ENCODE measurements at regions of chr6 and their contacts with region 1.

Region 1: DNA sequence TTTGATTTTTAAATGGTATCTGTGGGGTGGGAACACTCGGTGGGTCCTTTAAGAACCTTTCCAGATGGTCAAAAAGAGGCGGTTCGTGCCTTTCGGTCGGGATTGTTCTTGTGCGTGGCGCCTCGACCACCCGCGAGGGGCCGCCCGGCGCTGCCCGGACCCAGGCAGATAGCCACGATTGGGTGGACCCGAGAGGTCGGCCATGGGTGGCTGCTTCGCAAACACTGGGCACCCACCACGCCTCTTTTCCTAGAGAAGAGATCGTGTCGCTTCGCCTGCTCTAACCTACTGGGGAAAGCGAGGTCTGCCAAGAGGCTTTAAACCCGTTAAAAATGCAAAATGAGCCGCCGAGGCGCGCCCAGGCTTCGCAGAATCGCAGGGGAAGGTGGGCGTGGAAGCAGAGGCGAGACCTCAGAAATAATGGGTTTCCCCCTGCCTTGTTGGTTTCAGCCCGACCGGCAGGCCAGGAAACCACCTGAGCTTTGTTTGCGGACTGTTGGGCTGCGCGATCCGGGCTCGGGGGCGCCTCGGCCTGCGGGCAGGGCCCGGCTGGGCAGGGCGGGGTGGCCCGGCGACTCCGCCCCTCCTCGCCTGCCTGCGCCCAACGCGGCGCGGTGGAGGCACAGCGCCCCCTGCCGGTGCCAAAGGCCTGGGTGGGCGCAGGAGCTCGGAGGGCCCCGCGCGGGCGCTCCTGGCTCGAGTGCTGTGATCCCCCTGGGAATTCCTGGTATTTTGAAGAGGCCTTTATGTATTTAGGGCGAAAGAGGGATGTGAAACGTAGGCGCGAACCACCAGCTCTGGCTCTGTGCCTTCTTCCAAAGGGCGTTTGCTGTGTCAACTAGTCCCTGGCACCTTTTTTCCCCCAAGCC is 1.6 kb downstream of the MARCKS start:
- DNase-seq: peak; percentile 89
- ATAC-seq: peak; percentile 95
- H3K4me3 Mint-ChIP-seq: no peak overlapping the region
- H3K27ac Mint-ChIP-seq: no peak overlapping the region
- H3K4me1 Mint-ChIP-seq: peaks cover 13% of the 10 kb centered on the region
- H3K27me3 Mint-ChIP-seq: peaks cover 32% of the 10 kb centered on the region

Region 2: GRCh38 chr6:112087136-112087911 is 1771.4 kb before region 1 on chr6 and contains the starts of genes FAM229B and TUBE1:
- CTCF ChIA-PET with region 1: no interaction called
- POLR2A ChIA-PET with region 1: no interaction called
- intact Hi-C with region 1: loop called in 1 of 2 experiments (anchors 2 kb)
- DNase-seq: peak; percentile 95
- ATAC-seq: peak; percentile 98
- H3K4me3 Mint-ChIP-seq: no peak within 1 kb of the TSS
- H3K27ac Mint-ChIP-seq: no peak within 1 kb of the TSS
- H3K4me1 Mint-ChIP-seq: peaks cover 11% of the 10 kb centered on the region
- H3K27me3 Mint-ChIP-seq: peaks cover 12% of the 10 kb centered on the region
- total RNA-seq, gene FAM229B: 6.4 to 7.3 TPM
- total RNA-seq, gene TUBE1: 41.8 to 44.4 TPM

Region 3: GRCh38 chr6:112780498-112781096 is 1078.1 kb before region 1 on chr6:
- CTCF ChIA-PET with region 1: no interaction called
- POLR2A ChIA-PET with region 1: no interaction called
- intact Hi-C with region 1: loop called in 1 of 2 experiments (anchors 1 kb)
- DNase-seq: peak; percentile 64
- ATAC-seq: no peak
- H3K4me3 Mint-ChIP-seq: no peak overlapping the region
- H3K27ac Mint-ChIP-seq: no peak overlapping the region
- H3K4me1 Mint-ChIP-seq: no peaks in the 10 kb centered on the region
- H3K27me3 Mint-ChIP-seq: peaks cover 2% of the 10 kb centered on the region

Region 4: DNA sequence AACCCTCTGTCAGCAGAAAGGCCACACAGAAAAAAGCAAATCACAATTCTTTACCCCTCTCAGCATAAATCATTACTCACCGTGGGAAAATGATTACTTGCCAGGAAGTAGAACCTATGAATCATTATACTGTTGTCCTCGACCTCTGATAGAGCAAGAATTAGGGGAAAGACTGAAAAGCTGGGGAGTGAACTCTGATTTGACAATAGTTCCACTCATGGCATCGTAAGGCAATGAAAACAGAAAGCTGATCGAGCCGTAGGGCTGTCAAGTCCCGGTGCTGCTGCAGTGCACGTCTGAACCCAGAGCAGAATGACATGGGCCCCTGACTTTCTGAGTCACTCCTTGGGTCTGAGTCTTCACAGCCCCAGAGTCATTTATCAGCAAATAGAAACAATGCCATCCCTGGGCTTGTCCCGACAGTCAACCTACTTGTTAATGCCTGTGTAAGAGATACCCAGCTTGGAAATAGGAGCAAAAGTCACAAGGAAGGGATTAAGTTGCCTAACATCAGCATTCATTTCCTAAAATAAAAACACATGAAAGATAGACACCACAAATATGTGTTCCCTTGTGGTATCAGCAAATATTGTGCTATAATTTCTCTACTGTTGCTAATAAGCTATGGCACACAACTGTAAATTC is 226.4 kb before region 1 on chr6:
- CTCF ChIA-PET with region 1: no interaction called
- POLR2A ChIA-PET with region 1: no interaction called
- intact Hi-C with region 1: loop called (anchors 2 to 5 kb)
- DNase-seq: peak; percentile 78
- ATAC-seq: peak; percentile 90
- H3K4me3 Mint-ChIP-seq: peak overlapping the region; percentile 29
- H3K27ac Mint-ChIP-seq: peak overlapping the region; percentile 63
- H3K4me1 Mint-ChIP-seq: peaks cover 52% of the 10 kb centered on the region
- H3K27me3 Mint-ChIP-seq: peaks cover 15% of the 10 kb centered on the region

Region 5: GRCh38 chr6:113824411-113824810 is 34.3 kb before region 1 on chr6:
- CTCF ChIA-PET with region 1: no interaction called
- POLR2A ChIA-PET with region 1: no interaction called
- intact Hi-C with region 1: no loop called
- DNase-seq: no peak
- ATAC-seq: no peak
- H3K4me3 Mint-ChIP-seq: no peak overlapping the region
- H3K27ac Mint-ChIP-seq: no peak overlapping the region
- H3K4me1 Mint-ChIP-seq: no peaks in the 10 kb centered on the region
- H3K27me3 Mint-ChIP-seq: peaks cover 18% of the 10 kb centered on the region

Region 6: DNA sequence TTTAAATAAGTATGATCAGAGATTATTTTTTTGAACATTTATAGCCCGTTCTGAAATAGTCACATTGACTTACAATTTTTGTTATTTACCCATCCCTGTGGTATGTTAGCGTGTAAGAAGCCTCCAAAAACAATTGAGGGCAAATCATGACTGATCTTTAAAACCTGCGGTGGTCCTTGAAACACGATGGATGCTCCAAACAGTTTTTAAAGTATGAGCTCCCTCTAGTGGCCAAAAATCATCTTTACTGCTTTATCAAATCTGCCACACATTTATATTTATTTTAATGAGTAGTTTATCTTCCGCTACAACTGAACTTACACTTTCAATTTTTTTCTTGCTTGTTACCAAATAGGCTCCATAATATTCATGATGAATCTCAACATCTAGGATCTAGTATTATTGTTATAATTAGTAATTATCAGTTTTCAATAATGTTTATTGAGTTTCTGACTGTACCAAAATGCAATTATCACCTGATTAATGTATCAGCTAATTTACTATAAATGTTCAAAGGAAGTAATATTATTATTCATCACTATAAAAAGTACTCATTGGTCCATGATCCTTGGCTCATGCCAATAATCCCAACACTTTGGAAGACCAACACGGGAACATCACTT is 50.6 kb after region 1 on chr6:
- CTCF ChIA-PET with region 1: no interaction called
- POLR2A ChIA-PET with region 1: no interaction called
- intact Hi-C with region 1: no loop called
- DNase-seq: no peak
- ATAC-seq: no peak
- H3K4me3 Mint-ChIP-seq: no peak overlapping the region
- H3K27ac Mint-ChIP-seq: no peak overlapping the region
- H3K4me1 Mint-ChIP-seq: no peaks in the 10 kb centered on the region
- H3K27me3 Mint-ChIP-seq: peaks cover 5% of the 10 kb centered on the region

Region 7: GRCh38 chr6:113970805-113971676 is 112.3 kb after region 1 on chr6 and contains the start of gene HDAC2:
- CTCF ChIA-PET with region 1: no interaction called
- POLR2A ChIA-PET with region 1: no interaction called
- intact Hi-C with region 1: loop called in 1 of 2 experiments (anchors 2 kb)
- DNase-seq: peak; percentile 91
- ATAC-seq: peak; percentile 81
- H3K4me3 Mint-ChIP-seq: peak within 1 kb of the TSS; percentile 94
- H3K27ac Mint-ChIP-seq: peak within 1 kb of the TSS; percentile 99
- H3K4me1 Mint-ChIP-seq: peaks cover 36% of the 10 kb centered on the region
- H3K27me3 Mint-ChIP-seq: no peaks in the 10 kb centered on the region
- total RNA-seq, gene HDAC2: 96.0 to 101 TPM

Region 8: GRCh38 chr6:114600381-114600780 is 741.7 kb after region 1 on chr6:
- CTCF ChIA-PET with region 1: no interaction called
- POLR2A ChIA-PET with region 1: no interaction called
- intact Hi-C with region 1: no loop called
- DNase-seq: no peak
- ATAC-seq: no peak
- H3K4me3 Mint-ChIP-seq: no peak overlapping the region
- H3K27ac Mint-ChIP-seq: no peak overlapping the region
- H3K4me1 Mint-ChIP-seq: no peaks in the 10 kb centered on the region
- H3K27me3 Mint-ChIP-seq: no peaks in the 10 kb centered on the region